GM18951 (cell line): ENCODE measurements at regions of chr12 and their contacts with region 1.

Region 1: DNA sequence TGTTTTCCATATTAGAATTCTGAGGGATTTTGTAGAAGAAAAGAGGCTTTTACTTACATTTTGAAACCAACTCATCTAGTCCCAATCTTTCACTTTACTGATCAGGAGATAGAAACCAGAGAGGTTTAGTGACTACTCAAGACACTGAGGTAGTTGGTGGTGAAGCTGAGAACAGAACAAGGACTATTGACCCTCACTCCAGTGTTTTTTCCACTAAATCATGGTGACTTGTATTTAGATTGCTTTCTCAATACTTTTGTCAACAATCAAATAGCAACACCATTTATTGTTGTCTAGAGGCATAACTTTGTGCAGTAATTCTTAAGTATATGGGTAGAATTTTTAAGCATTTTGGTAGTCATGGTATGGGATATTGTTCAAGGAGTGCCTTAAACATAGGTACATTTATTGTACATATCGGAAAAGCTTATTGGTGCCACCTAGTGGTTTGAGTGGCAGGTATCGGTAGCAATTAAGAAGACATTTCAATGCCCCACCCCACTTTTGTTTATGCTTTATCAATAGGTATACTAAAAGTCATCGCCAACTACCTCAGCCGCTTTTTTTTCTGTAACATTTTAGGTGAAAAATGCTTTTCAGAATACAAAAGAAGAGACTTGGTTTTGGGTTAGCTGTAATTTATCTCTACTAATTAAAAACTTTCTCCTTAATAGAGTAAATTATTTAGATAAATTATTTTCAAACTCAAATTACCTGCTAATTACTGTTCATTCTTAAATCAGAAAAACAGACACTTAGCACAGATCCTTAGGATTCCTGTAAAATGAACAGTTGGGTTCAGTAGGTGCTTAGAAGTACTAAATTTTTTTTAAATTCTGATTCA is 47.3 kb upstream of the PAWR start:
- POLR2A ChIP-seq: no peak

Region 2: DNA sequence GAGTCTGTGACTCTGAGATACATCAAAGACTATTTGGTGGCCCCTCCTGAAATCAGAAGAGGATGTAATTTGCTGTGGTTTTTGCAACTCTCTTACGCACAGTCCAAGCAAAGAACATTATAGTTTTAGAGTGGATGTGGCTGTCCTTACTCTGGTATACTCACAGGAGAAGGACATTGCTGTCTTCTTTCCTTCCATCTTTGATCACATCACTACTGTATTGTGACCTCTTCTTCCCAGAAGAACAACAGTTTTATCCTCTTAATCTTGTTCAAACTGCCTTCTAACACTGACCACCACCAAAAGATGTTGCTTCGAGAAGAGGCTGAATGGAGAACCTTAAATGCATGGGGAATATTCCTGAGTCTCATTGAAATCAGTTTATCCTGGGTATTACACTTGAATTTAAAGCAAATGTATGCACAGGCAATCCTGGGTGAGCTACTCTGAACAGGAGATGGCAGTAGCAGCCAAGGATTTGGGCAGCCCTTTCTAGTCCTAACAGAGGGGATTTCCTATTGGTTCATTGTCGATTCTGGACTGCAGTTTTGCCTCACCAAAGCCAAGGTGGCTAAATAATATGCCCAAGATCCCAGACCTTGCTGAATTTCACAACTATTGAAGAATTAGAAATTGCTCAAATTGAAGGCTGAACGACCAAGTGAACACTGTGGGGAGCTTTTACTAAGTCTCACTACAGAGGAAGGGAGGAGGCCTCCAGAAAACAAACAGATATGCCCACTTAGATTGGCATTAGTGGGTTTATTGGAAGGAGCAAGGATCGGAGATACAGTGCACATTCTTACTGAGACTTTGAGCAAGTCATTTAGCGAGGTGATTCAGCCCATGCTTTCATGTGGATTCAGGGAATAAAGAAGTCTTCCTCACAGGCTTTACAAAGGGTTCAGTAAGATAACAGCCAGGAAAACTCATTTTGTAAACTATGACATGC is 330.1 kb before region 1 on chr12:
- in situ Hi-C with region 1: loop called (anchors 25 kb)
- POLR2A ChIP-seq: no peak

Region 3: DNA sequence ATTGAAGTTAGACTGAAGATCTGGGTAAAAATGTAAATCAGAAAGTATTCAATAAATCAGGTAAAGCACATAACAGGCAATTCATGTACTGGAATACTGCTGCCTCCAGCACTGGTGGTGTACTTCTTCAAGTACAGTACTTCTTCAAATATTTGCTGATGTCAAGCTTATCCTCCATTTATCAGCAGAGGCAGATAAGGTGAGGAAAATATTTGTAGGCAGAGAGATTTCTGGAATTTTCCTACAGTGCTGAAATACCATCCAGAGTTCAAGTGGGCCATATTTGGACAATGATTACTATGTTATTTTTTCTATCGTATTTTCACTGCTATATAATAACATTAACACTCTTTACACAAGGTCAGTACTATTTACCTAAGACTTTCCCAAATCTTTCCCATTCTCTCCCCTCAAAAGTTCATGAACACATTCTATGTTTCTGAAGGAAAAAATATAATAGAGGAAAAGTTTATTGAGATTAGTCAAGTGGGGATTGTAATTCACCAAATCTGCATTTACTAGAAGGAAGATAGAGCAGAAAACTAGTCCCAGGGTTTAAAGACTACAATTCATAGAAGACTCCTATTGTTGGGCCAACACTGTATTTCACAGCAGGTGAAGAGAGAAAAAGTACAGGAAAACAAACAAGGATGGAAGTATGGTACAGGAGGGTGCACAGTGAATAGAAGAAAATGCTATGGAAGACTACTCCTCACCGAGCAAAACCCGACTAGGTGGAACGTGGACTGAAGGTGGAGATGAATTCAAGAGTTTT is 188.4 kb before region 1 on chr12:
- in situ Hi-C with region 1: loop called (anchors 5 kb)
- POLR2A ChIP-seq: no peak

Region 4: DNA sequence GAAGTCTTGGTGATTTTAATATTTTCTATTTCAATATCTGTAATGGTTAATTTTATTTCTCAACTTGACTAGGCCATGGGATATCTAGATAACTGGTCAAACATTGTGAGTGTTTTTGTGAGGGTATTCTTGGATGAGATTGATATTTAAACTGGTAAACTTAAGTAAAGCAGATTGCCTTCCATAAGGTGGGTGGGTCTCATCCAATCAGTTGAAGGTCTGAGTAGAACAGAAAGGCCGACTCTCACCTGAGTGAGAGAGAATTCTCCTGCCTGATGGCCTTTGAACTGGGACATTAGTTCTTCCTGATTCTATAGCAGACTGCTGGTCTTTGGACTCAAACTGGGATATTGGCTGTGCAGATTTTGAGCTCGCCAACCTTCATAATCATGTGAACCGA is 397.5 kb after region 1 on chr12:
- in situ Hi-C with region 1: no loop called
- POLR2A ChIP-seq: no peak